CD4-positive, alpha-beta T cell (primary cell): ENCODE measurements at regions of chr2 and their contacts with region 1.

Region 1: DNA sequence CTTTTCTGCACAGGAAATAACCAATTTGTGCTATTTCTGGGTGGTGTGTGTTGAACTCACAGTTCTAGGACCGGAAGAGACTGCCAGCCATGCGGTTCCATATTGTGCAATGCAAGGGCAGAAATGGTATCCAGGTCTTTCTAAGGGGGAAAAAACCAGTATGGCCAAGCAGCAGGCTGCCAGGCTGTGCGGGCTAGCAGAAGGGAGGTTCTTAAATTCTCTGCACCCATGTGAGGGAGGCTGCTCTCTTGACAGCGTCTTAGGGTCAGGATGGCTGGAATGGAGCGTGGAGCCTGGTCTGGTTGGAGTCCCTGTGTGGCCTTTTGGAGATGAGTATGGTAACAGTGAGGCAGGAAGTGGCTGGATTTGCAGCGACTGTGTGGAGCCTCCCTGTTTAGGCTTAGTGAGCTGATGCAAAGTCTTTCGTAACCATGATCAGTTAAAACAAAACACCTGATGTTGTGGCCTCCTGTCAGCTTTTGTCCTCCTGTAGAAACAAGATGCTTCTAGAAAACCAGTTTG is 52.6 kb downstream of the NCK2 start:
- DNase-seq: peak in 4 of 14 experiments; percentile 51 to 84 (median 68)
- ATAC-seq: peak; percentile 24
- H3K4me3 ChIP-seq: peak overlapping the region; percentile 13
- H3K4me3 Mint-ChIP-seq: peak overlapping the region; percentile 77
- H3K27ac ChIP-seq: peak overlapping the region; percentile 52 to 81
- H3K27ac Mint-ChIP-seq: peak overlapping the region; percentile 98
- H3K4me1 ChIP-seq: peaks cover 88% of the 10 kb centered on the region
- H3K4me1 Mint-ChIP-seq: peaks cover 92% of the 10 kb centered on the region
- H3K27me3 ChIP-seq: no peaks in the 10 kb centered on the region
- H3K27me3 Mint-ChIP-seq: no peaks in the 10 kb centered on the region
- CTCF ChIP-seq: no peak

Region 2: GRCh38 chr2:105761931-105762515 is 35.3 kb before region 1 on chr2:
- CTCF ChIA-PET with region 1: no interaction called
- POLR2A ChIA-PET with region 1: interaction called, 35 read pairs
- intact Hi-C with region 1: no loop called
- DNase-seq: no peak
- ATAC-seq: no peak
- H3K4me3 ChIP-seq: peak overlapping the region; percentile 17
- H3K4me3 Mint-ChIP-seq: peak overlapping the region; percentile 58
- H3K27ac ChIP-seq: peak overlapping the region; percentile 22 to 44
- H3K27ac Mint-ChIP-seq: peak overlapping the region; percentile 98
- H3K4me1 ChIP-seq: peaks cover 87% of the 10 kb centered on the region
- H3K4me1 Mint-ChIP-seq: peaks cover 98% of the 10 kb centered on the region
- H3K27me3 ChIP-seq: no peaks in the 10 kb centered on the region
- H3K27me3 Mint-ChIP-seq: no peaks in the 10 kb centered on the region
- CTCF ChIP-seq: no peak

Region 3: DNA sequence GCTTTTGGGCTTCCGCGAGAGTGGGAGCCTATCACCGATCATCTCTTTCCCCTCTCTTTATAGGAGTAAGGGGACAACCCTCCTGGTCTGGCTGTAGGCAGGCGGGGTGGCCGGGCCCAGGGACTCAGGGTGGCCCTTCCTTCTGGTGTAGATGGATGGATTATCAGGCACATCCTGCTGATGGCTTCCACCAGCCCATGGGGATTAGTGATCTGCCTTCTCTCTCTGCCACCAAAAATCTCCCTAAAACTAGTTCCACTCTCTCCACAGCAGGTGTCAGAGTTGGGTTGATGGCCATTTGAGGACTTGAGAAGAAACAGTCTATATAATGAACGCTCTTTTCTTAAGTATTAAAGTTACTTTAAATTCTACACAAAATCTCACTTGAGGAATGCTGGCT is 15.2 kb before region 1 on chr2:
- CTCF ChIA-PET with region 1: interaction called, 7 read pairs
- POLR2A ChIA-PET with region 1: interaction called, 26 read pairs
- intact Hi-C with region 1: loop called in 1 of 2 experiments (anchors 2 kb)
- DNase-seq: peak in 3 of 14 experiments; percentile 42 to 73 (median 69)
- ATAC-seq: peak; percentile 56
- H3K4me3 ChIP-seq: no peak overlapping the region
- H3K4me3 Mint-ChIP-seq: peak overlapping the region; percentile 81
- H3K27ac ChIP-seq: peak overlapping the region in 1 of 2 donors; percentile 47
- H3K27ac Mint-ChIP-seq: peak overlapping the region; percentile 98
- H3K4me1 ChIP-seq: peaks cover 96% of the 10 kb centered on the region
- H3K4me1 Mint-ChIP-seq: peaks cover 97% of the 10 kb centered on the region
- H3K27me3 ChIP-seq: no peaks in the 10 kb centered on the region
- H3K27me3 Mint-ChIP-seq: no peaks in the 10 kb centered on the region
- CTCF ChIP-seq: peak; percentile 52

Region 4: DNA sequence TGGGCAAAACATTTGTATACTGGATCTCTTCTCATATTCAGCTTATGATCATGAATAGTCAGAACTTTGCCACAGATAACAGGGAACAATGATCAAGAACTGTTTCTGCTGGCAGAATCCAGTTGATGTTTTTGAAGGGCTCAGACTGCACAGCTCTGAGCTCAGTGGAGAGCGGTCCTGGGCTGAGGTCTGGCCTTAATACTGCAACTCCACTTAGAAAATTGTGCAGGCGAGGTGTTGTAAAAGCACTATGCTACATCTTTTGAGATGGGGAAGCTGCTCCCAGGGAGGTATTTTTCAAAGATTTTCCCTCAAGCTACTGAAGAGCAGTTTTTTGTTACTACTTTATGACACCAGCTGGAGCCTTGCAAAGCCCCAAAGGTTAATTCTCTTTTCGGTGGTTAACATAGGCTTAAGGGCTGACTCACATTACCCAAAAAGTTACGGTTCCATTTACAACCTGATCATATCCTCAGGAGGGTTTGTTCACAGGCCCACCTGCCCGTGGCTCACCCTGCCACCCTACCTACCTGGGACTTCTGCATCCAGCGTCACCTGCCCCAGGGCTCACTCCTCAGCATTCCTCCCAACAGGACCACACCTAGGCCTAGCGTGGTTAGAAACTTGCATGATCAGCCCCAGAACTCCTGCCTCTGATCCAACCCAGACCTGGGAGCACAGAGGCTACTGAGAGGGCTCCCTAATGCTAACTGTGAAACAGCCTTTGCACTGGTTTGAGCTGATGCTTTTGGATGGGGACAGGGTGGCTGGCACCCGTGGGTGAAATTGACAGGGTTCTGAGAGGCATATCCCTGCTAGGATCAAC is 61.7 kb after region 1 on chr2:
- CTCF ChIA-PET with region 1: interaction called, 5 read pairs
- POLR2A ChIA-PET with region 1: interaction called, 30 read pairs
- intact Hi-C with region 1: loop called in 1 of 2 experiments (anchors 5 kb)
- DNase-seq: peak in 1 of 14 experiments; percentile 60
- ATAC-seq: peak; percentile 25
- H3K4me3 ChIP-seq: no peak overlapping the region
- H3K4me3 Mint-ChIP-seq: peak overlapping the region; percentile 27
- H3K27ac ChIP-seq: peak overlapping the region; percentile 26 to 90
- H3K27ac Mint-ChIP-seq: peak overlapping the region; percentile 97
- H3K4me1 ChIP-seq: peaks cover 89% of the 10 kb centered on the region
- H3K4me1 Mint-ChIP-seq: peaks cover 95% of the 10 kb centered on the region
- H3K27me3 ChIP-seq: no peaks in the 10 kb centered on the region
- H3K27me3 Mint-ChIP-seq: no peaks in the 10 kb centered on the region
- CTCF ChIP-seq: no peak